IMR-90 (cell line): ENCODE measurements at regions of chr3 and their contacts with region 1.

Region 1: GRCh38 chr3:196081791-196082618 is at the start of gene TFRC:
- DNase-seq: peak; percentile 86
- ATAC-seq: peak; percentile 95
- H3K4me3 ChIP-seq: peak within 1 kb of the TSS; percentile 72
- H3K27ac ChIP-seq: peak within 1 kb of the TSS; percentile 61
- H3K4me1 ChIP-seq: no peaks in the 10 kb centered on the region
- H3K27me3 ChIP-seq: no peaks in the 10 kb centered on the region
- CTCF ChIP-seq: no peak
- POLR2A ChIP-seq: peak; percentile 99
- RAD21 ChIP-seq: no peak
- total RNA-seq, gene TFRC: 156 and 207 TPM in 2 replicates

Region 2: DNA sequence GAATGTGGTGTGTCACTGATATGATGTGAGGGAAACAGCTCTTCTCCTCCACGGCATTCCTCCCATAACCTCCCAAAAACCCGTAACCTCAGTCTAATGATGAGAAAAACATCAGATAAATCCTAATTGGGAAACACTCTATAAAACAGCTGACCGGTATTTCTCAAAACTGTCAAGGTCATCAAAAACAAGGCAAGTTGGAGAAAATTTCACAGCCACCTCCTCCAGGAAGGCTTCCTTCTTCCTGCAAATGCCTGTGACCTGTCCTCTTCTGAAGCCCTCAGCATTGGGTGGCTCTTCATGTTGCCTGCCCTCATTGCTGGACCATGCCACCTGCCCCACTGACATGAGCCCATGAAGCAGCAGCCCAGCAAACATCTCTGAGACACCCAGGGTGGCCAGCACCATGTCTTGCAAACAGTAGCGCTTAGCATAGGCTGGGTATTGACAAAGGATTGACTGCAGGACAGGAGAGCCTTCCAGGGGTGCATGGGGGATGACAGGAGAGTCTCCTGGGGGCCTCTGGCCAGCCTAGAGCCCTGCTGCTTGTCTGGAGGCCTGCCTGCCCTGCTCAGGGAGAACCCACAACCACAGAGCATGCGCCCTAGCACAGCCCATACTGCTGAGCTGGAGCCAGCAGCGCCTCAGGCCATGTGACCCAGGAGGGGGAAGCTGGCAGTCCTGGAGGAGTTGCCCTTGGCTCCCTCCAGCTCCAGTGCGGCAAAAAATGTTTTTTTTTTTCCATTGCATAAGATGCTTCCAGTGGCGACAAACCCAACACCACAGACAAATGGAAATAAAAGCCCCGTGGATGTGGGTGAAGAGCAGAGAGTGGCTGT is 860.8 kb before region 1 on chr3:
- CTCF ChIA-PET with region 1: no interaction called
- POLR2A ChIA-PET with region 1: no interaction called
- dilution Hi-C with region 1: no loop called
- in situ Hi-C with region 1: no loop called
- intact Hi-C with region 1: no loop called
- DNase-seq: peak; percentile 26
- ATAC-seq: peak; percentile 74
- H3K4me3 ChIP-seq: no peak overlapping the region
- H3K27ac ChIP-seq: no peak overlapping the region
- H3K4me1 ChIP-seq: peaks cover 10% of the 10 kb centered on the region
- H3K27me3 ChIP-seq: no peaks in the 10 kb centered on the region
- CTCF ChIP-seq: no peak
- POLR2A ChIP-seq: no peak
- RAD21 ChIP-seq: no peak

Region 3: DNA sequence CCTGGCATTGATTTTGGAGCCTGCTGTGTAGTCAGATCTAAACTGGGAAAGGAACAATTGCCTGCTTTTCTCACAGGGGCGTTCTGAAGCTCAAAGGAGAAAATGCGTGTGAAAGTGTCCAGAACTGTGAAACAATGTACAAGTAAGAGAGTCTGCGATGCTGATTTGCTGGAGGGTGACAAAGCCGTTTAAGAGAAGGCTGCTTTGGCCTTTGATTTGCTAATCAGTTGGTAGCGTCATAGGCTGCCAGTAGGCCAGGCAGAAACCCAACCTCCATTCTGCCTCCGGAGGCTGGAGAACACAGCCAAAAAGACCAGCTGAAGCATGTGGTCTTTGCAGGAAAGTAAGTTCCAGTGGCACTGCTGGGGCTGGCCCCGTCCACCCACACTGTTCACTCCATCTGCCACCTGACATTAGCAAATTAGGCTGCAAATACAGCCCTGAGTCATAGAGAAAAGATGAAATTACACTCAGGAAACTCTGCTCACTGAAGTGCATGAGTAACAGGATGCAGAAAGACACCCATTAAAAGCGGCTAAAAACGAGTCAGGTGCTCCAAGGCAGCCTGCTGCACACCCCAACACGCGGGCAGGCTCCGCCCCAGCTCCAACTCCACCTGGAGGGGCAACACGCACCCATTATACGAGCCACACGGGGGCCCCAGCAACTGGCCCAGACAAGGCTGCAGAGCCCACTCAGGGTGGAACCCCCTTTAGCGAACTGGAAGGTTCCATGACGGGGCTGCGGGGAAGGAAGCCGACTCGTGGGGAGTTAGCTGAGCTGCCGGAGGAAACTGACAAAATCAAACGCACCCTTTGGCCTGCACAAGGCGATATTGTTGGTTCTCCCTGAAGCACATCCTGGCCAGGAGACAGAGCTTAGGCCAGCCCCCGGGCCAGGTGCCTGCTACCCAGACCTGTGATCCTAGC is 97.6 kb after region 1 on chr3:
- CTCF ChIA-PET with region 1: no interaction called
- POLR2A ChIA-PET with region 1: no interaction called
- dilution Hi-C with region 1: no loop called
- in situ Hi-C with region 1: no loop called
- intact Hi-C with region 1: loop called (anchors 5 kb)
- DNase-seq: peak; percentile 77
- ATAC-seq: peak; percentile 83
- H3K4me3 ChIP-seq: no peak overlapping the region
- H3K27ac ChIP-seq: no peak overlapping the region
- H3K4me1 ChIP-seq: peaks cover 3% of the 10 kb centered on the region; the same call in 1 of the 2 replicates
- H3K27me3 ChIP-seq: peaks cover 4% of the 10 kb centered on the region; the same call in 1 of the 2 replicates
- CTCF ChIP-seq: no peak
- POLR2A ChIP-seq: no peak
- RAD21 ChIP-seq: no peak

Region 4: GRCh38 chr3:196202516-196202970 is 120.5 kb after region 1 on chr3:
- CTCF ChIA-PET with region 1: no interaction called
- POLR2A ChIA-PET with region 1: no interaction called
- dilution Hi-C with region 1: no loop called
- in situ Hi-C with region 1: loop called (anchors 5 kb)
- intact Hi-C with region 1: no loop called
- DNase-seq: peak; percentile 32
- ATAC-seq: peak; percentile 68
- H3K4me3 ChIP-seq: no peak overlapping the region
- H3K27ac ChIP-seq: no peak overlapping the region
- H3K4me1 ChIP-seq: peaks cover 3% of the 10 kb centered on the region; the same call in 1 of the 2 replicates
- H3K27me3 ChIP-seq: peaks cover 12% of the 10 kb centered on the region
- CTCF ChIP-seq: no peak
- POLR2A ChIP-seq: no peak
- RAD21 ChIP-seq: no peak

Region 5: DNA sequence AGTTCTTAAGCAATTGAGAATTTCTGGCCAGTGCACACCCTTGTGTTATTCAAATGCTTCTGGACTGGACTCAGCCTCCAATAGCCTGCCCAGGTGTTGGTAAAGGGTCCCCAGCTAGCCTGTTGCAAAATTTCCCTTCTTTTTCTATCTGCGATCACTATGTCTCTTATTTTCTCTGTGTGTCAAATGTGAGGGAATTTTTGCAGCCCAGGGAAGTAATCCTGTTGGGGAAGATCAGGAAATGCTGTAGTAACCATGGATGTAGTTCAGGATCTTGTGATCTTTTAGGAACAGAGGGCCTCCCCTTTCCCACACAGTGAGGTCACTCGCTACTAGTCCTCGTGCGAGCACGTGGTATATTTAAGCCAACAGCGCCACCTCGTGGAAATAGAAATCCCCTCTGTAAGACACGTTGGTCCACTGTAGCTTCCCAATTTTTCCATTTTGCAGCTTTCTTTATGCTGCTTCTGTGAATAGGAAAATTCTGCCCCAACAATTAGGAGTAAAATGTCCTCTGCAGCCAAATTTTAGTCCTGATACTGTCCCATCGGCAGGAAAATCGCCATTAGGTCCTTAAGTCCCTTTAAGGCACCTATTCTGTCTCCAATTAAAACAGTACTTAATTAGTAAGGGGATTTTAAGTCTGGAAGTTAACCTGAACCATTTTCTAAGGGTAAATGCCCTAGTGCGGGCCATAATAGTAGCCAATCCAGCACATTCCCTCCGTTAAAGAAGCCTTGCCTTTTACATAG is 437.1 kb after region 1 on chr3:
- CTCF ChIA-PET with region 1: no interaction called
- POLR2A ChIA-PET with region 1: no interaction called
- dilution Hi-C with region 1: no loop called
- in situ Hi-C with region 1: loop called (anchors 10 kb)
- intact Hi-C with region 1: loop called (anchors 5 kb)
- DNase-seq: peak; percentile 73
- ATAC-seq: peak; percentile 83
- H3K4me3 ChIP-seq: no peak overlapping the region
- H3K27ac ChIP-seq: no peak overlapping the region
- H3K4me1 ChIP-seq: no peaks in the 10 kb centered on the region
- H3K27me3 ChIP-seq: no peaks in the 10 kb centered on the region
- CTCF ChIP-seq: peak; percentile 74
- POLR2A ChIP-seq: no peak
- RAD21 ChIP-seq: peak; percentile 86